ENCODE measurements at regions of chr15 and their contacts with region 1.

Region 1: GRCh38 chr15:66654739-66655375 is 47.2 kb upstream of the SMAD6 start:
- DNase-seq: peak in 9 of 10 donors; percentile 9 to 43 (median 24)
- ATAC-seq: peak; percentile 83 to 88
- H3K4me3 Mint-ChIP-seq: peak overlapping the region in 8 of 10 donors; percentile 45 to 80 (median 66)
- H3K27ac Mint-ChIP-seq: peak overlapping the region in 4 of 10 donors; percentile 23 to 63 (median 36)
- H3K4me1 Mint-ChIP-seq: peaks cover 6 to 14% (median 9%) of the 10 kb centered on the region in 4 donors
- H3K27me3 Mint-ChIP-seq: peaks cover 8 to 14% (median 13%) of the 10 kb centered on the region in 5 donors

Region 2: GRCh38 chr15:66524838-66525237 is 130.0 kb before region 1 on chr15:
- POLR2A ChIA-PET with region 1: no interaction called
- DNase-seq: no peak
- ATAC-seq: no peak
- H3K4me3 Mint-ChIP-seq: no peak overlapping the region
- H3K27ac Mint-ChIP-seq: peak overlapping the region in 3 of 10 donors; percentile 5 to 14 (median 8)
- H3K4me1 Mint-ChIP-seq: no peaks in the 10 kb centered on the region
- H3K27me3 Mint-ChIP-seq: no peaks in the 10 kb centered on the region

Region 3: GRCh38 chr15:66617137-66618090 is 37.4 kb before region 1 on chr15:
- POLR2A ChIA-PET with region 1: no interaction called
- DNase-seq: no peak
- ATAC-seq: no peak
- H3K4me3 Mint-ChIP-seq: peak overlapping the region in 1 of 10 donors; percentile 19
- H3K27ac Mint-ChIP-seq: no peak overlapping the region
- H3K4me1 Mint-ChIP-seq: peaks cover 9 to 36% (median 16%) of the 10 kb centered on the region in 4 donors
- H3K27me3 Mint-ChIP-seq: peaks cover 6 to 22% (median 13%) of the 10 kb centered on the region in 5 donors

Region 4: GRCh38 chr15:66638377-66638776 is 16.5 kb before region 1 on chr15:
- POLR2A ChIA-PET with region 1: interaction called, 16 read pairs
- DNase-seq: peak in 2 of 10 donors; percentile 9 to 48
- ATAC-seq: peak; percentile 66 to 95
- H3K4me3 Mint-ChIP-seq: peak overlapping the region in 1 of 10 donors; percentile 4
- H3K27ac Mint-ChIP-seq: peak overlapping the region in 4 of 10 donors; percentile 38 to 75 (median 50)
- H3K4me1 Mint-ChIP-seq: peaks cover 5 to 10% (median 9%) of the 10 kb centered on the region in 4 donors
- H3K27me3 Mint-ChIP-seq: no peaks in the 10 kb centered on the region

Region 5: DNA sequence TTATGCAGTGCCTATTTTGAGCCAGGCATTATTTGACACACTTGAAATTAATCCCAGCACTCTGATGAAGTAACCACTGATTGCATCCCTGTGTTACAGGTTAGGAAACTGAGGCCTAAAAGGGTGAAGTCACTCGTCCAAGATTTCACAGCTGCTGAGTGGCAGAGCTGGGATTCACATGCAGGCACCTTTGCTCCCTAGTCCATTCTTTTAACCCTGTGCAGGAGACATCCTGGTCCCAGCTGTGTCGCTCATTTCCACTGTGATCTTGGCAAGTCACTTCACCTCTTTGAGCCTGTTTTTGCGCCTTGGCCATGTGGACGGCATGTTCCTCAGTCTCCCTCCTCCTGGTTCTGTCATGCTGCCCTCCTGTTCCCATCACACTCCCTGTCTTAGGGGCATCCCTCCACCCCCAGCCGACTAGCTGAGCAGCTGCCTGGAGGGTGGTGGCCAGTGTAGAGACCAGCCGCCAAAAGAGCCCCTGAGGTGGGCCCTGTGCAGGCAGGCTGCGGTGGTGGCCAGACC is 117.8 kb after region 1 on chr15:
- POLR2A ChIA-PET with region 1: interaction called, 12 read pairs
- DNase-seq: no peak
- ATAC-seq: no peak
- H3K4me3 Mint-ChIP-seq: no peak overlapping the region
- H3K27ac Mint-ChIP-seq: no peak overlapping the region
- H3K4me1 Mint-ChIP-seq: no peaks in the 10 kb centered on the region
- H3K27me3 Mint-ChIP-seq: peaks cover 0 to 5% (median 4%) of the 10 kb centered on the region in 5 donors